SK-N-SH (cell line): ENCODE measurements at regions of chr21 and their contacts with region 1.

Region 1: GRCh38 chr21:25360593-25360992 is 246.7 kb downstream of the MRPL39 start:
- DNase-seq: no peak
- H3K4me3 ChIP-seq: no peak overlapping the region
- H3K27ac ChIP-seq: no peak overlapping the region
- H3K4me1 ChIP-seq: no peaks in the 10 kb centered on the region
- H3K27me3 ChIP-seq: no peaks in the 10 kb centered on the region
- CTCF ChIP-seq: peak; percentile 37
- EP300 ChIP-seq: no peak
- RAD21 ChIP-seq: no peak

Region 2: DNA sequence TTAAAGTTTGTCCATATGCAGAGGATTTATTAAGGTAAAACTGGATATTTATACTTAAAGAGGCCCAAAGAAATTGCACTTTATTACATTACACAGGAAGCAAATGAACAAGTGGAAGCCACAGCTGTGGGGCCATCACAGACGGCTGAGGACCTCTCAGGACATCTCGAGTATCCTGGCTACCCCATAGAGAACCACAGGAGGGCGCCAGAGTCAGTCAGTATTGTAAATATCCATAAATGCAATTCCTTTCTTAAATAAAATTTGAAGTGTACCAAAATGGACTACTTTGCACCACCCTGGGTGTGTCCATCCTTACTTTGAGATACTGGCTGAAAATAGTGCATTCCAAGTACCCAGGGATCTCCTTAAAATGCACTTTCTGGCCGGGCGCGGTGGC is 10.5 kb before region 1 on chr21:
- CTCF ChIA-PET with region 1: interaction called, 10 read pairs
- POLR2A ChIA-PET with region 1: no interaction called
- DNase-seq: peak; percentile 25
- H3K4me3 ChIP-seq: no peak overlapping the region
- H3K27ac ChIP-seq: no peak overlapping the region
- H3K4me1 ChIP-seq: no peaks in the 10 kb centered on the region; a peak in 1 of 4 replicates
- H3K27me3 ChIP-seq: no peaks in the 10 kb centered on the region
- CTCF ChIP-seq: peak; percentile 73
- EP300 ChIP-seq: no peak
- RAD21 ChIP-seq: peak; percentile 63